ENCODE measurements at regions of chr12 and their contacts with region 1.

Region 1: DNA sequence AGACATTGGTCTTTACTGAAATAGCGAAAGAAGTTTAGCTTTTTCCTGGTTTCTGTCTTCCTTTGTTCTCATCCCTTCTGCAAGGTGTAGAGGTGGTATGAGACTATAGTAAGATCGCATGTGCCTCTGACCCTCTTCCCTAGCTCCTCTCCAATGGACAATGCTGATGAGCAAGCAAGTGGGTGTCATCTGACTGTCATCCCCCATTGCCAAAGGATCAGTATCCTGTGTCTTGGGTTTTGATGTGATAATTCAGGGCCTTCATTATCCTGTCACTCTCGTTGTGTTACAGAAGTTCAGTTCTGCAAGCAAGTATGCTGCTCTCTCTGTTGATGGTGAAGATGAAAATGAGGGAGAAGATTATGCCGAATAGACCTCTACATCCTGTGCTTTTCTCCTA is 10.0 kb upstream of the TNS2 start:
- DNase-seq: no peak
- H3K4me3 ChIP-seq: no peak overlapping the region
- H3K27ac ChIP-seq: no peak overlapping the region
- H3K4me1 ChIP-seq: peaks cover 10% of the 10 kb centered on the region
- H3K27me3 ChIP-seq: no peaks in the 10 kb centered on the region
- CTCF ChIP-seq: no peak

Region 2: DNA sequence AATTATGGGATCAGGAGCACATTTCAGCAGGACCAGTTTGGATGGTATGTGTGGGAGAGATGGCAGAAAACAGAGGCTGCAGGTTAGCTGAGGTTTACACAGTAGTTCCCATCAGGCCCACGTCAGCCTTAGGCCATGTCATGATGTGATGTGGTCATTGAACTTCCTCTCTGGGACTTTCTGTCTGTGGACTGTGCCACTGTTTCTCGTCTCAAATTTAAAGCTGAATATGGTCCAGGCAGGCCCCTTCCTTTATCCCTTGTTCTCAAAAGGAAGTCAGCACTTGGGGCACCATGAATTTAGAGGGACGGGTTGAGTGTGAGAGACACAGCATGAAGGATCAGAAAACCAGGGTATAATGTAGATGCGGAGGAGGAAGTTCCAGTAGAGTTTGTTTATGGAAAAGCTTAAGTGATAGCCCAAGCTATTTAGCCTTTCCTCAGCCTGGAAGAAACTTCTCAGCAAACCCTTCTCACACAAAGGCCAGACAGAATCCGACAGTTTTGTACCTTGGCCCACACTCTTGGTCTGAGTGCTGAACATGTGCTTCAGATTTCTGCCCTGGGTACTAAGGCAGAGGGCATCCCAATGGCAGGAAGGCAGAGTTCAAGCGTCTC is 54.0 kb after region 1 on chr12:
- CTCF ChIA-PET with region 1: no interaction called
- dilution Hi-C with region 1: loop called (anchors 5 kb)
- in situ Hi-C with region 1: no loop called
- intact Hi-C with region 1: no loop called
- DNase-seq: no peak
- H3K4me3 ChIP-seq: no peak overlapping the region
- H3K27ac ChIP-seq: no peak overlapping the region
- H3K4me1 ChIP-seq: peaks cover 28% of the 10 kb centered on the region
- H3K27me3 ChIP-seq: no peaks in the 10 kb centered on the region
- CTCF ChIP-seq: no peak